Transverse colon (tissue), 4 donors: ENCODE measurements at regions of chr9 and their contacts with region 1.

Region 1: GRCh38 chr9:133992780-133993634 is 883 bp upstream of the VAV2 start:
- DNase-seq: peak; percentile 92
- H3K4me3 ChIP-seq: peak overlapping the region; percentile 58 to 73 (median 66)
- H3K27ac ChIP-seq: peak overlapping the region; percentile 88 to 94 (median 90)
- H3K4me1 ChIP-seq: peaks cover 8 to 34% (median 27%) of the 10 kb centered on the region in 4 donors
- H3K27me3 ChIP-seq: no peaks in the 10 kb centered on the region
- CTCF ChIP-seq: peak; percentile 16 to 51 (median 35)
- EP300 ChIP-seq: no peak
- POLR2A ChIP-seq: peak; percentile 73

Region 2: DNA sequence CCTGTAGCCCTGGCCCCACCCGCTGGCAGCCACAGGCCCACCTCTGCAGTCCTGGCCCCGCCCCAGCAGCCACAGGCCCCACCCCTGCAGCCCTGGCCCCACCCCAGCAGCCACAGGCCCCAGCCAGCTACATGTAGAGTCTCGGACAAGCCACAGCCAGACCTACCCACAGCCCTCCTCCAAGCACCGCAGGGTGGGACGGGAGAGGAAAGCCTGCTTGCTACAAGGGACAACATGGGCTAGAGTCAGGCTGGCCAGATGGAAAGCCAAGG is 205.3 kb before region 1 on chr9:
- in situ Hi-C with region 1: loop called in 3 of 4 experiments (anchors 5 kb)
- intact Hi-C with region 1: no loop called
- DNase-seq: peak; percentile 77
- H3K4me3 ChIP-seq: no peak overlapping the region
- H3K27ac ChIP-seq: peak overlapping the region in 1 of 4 donors; percentile 71
- H3K4me1 ChIP-seq: peaks cover 4 to 29% (median 24%) of the 10 kb centered on the region in 4 donors
- H3K27me3 ChIP-seq: no peaks in the 10 kb centered on the region
- CTCF ChIP-seq: no peak
- EP300 ChIP-seq: no peak
- POLR2A ChIP-seq: no peak

Region 3: GRCh38 chr9:133792721-133793470 is 200.1 kb before region 1 on chr9:
- in situ Hi-C with region 1: loop called in 3 of 4 experiments (anchors 5 kb)
- intact Hi-C with region 1: loop called (anchors 2 kb)
- DNase-seq: peak; percentile 77
- H3K4me3 ChIP-seq: no peak overlapping the region
- H3K27ac ChIP-seq: no peak overlapping the region
- H3K4me1 ChIP-seq: peaks cover 4 to 31% (median 25%) of the 10 kb centered on the region in 4 donors
- H3K27me3 ChIP-seq: no peaks in the 10 kb centered on the region
- CTCF ChIP-seq: peak; percentile 92 to 97 (median 96)
- EP300 ChIP-seq: no peak
- POLR2A ChIP-seq: no peak

Region 4: DNA sequence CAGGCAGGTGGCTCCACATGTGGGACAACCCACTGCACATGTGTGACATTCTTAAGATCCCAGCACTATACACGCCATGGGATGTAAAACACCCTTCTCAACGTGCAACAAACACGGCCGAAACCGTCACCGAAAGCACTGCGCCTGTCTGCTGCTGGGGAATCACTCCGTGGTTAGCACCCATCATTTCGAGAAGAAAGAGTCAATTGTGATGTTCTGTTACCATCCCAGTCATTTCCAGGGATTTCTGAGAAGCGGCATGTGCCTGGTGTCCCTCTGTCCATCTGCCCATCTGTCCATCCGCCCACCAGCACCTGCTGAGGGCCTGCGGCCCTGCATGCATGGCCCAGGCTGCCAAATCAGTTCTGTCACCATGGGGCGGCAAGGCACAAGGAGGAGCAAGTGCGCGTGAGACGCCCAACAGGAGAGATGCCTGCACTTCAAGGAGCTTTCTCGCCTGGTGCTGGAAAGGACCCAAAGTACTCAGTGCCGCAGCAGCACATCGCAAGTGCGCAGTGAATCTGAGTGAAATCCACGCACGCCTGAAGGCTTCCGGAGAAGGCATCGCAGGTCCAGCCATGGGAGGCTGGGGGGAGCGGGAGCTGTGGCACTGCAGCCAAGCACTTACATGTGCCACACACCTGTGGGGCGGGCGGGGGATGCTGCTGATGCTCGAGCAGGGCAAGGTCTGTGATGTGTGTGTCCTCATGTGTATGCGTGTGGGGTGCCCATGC is 38.9 kb before region 1 on chr9:
- in situ Hi-C with region 1: no loop called
- intact Hi-C with region 1: loop called (anchors 1 kb)
- DNase-seq: no peak
- H3K4me3 ChIP-seq: no peak overlapping the region
- H3K27ac ChIP-seq: no peak overlapping the region
- H3K4me1 ChIP-seq: peaks cover 0 to 31% (median 8%) of the 10 kb centered on the region in 4 donors
- H3K27me3 ChIP-seq: no peaks in the 10 kb centered on the region
- CTCF ChIP-seq: no peak
- EP300 ChIP-seq: no peak
- POLR2A ChIP-seq: no peak

Region 5: GRCh38 chr9:134128727-134129679 is 136.0 kb after region 1 on chr9:
- in situ Hi-C with region 1: no loop called
- intact Hi-C with region 1: no loop called
- DNase-seq: no peak
- H3K4me3 ChIP-seq: no peak overlapping the region
- H3K27ac ChIP-seq: no peak overlapping the region
- H3K4me1 ChIP-seq: peaks cover 0 to 9% (median 5%) of the 10 kb centered on the region in 4 donors
- H3K27me3 ChIP-seq: no peaks in the 10 kb centered on the region
- CTCF ChIP-seq: no peak
- EP300 ChIP-seq: no peak
- POLR2A ChIP-seq: no peak